ENCODE measurements at regions of chr7 and their contacts with region 1.

Region 1: GRCh38 chr7:76317782-76318487 is 15.5 kb downstream of the HSPB1 start:
- DNase-seq: peak; percentile 98
- H3K4me3 ChIP-seq: peak overlapping the region; percentile 91
- H3K27ac ChIP-seq: peak overlapping the region; percentile 98
- H3K4me1 ChIP-seq: peaks cover 45% of the 10 kb centered on the region
- H3K27me3 ChIP-seq: no peaks in the 10 kb centered on the region
- CTCF ChIP-seq: no peak

Region 2: GRCh38 chr7:75993689-75994387 is 324.1 kb before region 1 on chr7:
- intact Hi-C with region 1: no loop called
- DNase-seq: peak; percentile 78
- H3K4me3 ChIP-seq: peak overlapping the region; percentile 99
- H3K27ac ChIP-seq: peak overlapping the region; percentile 99
- H3K4me1 ChIP-seq: peaks cover 64% of the 10 kb centered on the region
- H3K27me3 ChIP-seq: no peaks in the 10 kb centered on the region
- CTCF ChIP-seq: no peak

Region 3: DNA sequence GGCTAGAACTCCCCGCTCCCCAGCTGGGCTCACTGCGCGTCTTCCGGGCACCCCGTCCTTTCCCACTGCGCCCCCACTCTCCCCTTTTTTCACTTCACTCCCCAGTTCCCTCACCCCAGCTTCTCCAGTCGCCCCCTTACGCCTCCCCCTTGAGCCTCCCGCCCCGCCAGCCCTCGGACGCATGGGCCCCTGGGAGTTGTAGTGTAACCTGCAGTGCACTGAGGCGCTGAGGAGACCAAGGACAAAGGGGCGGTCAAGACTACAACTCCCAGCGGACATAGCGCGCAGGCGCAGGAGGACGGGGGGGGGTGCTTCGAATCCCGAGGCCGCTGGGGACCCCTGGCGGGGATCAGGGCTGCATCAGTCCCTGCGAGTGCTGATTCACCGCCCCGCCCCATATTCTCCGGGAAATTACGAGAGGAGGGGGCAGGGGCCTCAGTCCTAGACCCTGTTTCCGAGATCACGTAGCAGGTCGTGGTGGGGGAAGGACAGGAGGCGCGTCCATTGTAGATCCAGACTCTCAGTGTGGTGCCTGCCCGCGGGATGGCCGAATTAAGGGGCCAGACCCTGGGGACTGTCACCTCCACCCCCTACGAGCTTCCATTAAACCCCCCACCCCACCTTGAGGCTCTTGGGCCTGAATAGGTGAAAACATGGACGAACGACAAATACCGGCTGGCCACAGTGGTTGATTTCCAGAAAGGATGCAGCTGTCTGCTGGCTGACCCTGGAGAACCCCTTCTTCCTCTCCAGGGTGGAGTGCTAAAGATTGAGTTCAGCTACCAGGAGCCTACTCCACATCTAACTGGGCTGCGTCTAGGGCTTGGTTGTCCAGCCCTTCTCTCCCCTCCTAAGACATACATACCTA is 41.4 kb after region 1 on chr7:
- intact Hi-C with region 1: loop called (anchors 5 kb)
- DNase-seq: peak; percentile 98
- H3K4me3 ChIP-seq: peak overlapping the region; percentile 92
- H3K27ac ChIP-seq: peak overlapping the region; percentile 99
- H3K4me1 ChIP-seq: peaks cover 62% of the 10 kb centered on the region
- H3K27me3 ChIP-seq: no peaks in the 10 kb centered on the region
- CTCF ChIP-seq: peak; percentile 79

Measured in left ventricle myocardium inferior (tissue), 1 donor.